SK-N-SH (cell line): ENCODE measurements at regions of chr7 and their contacts with region 1.

Region 1: GRCh38 chr7:73828107-73828803 is 2.5 kb upstream of the CLDN4 start:
- DNase-seq: peak; percentile 93
- H3K4me3 ChIP-seq: no peak overlapping the region
- H3K27ac ChIP-seq: peak overlapping the region; percentile 19 to 94; a peak in 3 of 4 replicates
- H3K4me1 ChIP-seq: peaks cover 21 to 54% of the 10 kb centered on the region in 2 experiments
- H3K27me3 ChIP-seq: no peaks in the 10 kb centered on the region
- CTCF ChIP-seq: no peak
- EP300 ChIP-seq: no peak; a peak in 1 of 4 replicates
- RAD21 ChIP-seq: no peak; the same call in 1 of the 2 replicates

Region 2: DNA sequence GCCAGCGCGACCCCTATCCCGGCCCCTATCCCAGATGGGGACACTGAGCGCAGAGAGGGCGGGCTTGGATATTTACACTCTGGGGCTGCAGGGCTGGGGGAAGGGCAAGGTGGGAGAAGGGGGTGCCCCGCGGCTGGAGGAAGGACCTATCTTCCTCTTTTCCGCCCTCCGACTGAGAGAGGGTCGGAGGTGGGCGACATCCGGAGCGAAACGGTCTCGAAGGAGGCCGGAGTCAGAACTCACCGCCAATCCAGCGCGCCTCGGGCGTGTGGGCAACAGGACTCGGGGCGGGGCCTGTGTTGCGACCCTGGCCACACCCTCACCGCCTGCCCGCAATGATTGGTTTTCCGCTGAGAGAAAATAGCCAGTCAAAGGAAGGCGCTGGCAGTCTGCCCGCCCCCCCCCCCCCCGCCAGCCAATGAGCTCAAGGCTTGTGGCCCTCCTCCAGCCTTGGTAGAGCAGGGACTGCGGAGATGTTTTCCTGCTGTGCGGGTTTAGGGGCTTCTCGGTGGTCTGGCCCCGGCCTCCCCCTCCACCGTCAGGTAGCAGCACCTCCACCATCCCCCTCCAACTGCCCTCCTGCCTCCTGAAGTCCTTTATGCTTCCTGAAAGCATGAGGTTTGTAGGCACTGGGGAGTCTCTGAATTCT is 14.1 kb after region 1 on chr7 and contains the start of gene METTL27:
- CTCF ChIA-PET with region 1: interaction called, 44 read pairs
- POLR2A ChIA-PET with region 1: interaction called, 10 read pairs
- DNase-seq: peak; percentile 100
- H3K4me3 ChIP-seq: peak within 1 kb of the TSS; percentile 57 to 99
- H3K27ac ChIP-seq: peak within 1 kb of the TSS; percentile 57 to 76; a peak in 3 of 4 replicates
- H3K4me1 ChIP-seq: peaks cover 0 to 8% of the 10 kb centered on the region in 2 experiments; a peak in 1 of 4 replicates
- H3K27me3 ChIP-seq: no peaks in the 10 kb centered on the region
- CTCF ChIP-seq: no peak
- EP300 ChIP-seq: no peak
- RAD21 ChIP-seq: no peak
- polyA plus RNA-seq, gene METTL27: 2.9 and 3.1 TPM in 2 replicates

Region 3: GRCh38 chr7:73872056-73872908 is 44.0 kb after region 1 on chr7:
- CTCF ChIA-PET with region 1: no interaction called
- POLR2A ChIA-PET with region 1: no interaction called
- DNase-seq: no peak
- H3K4me3 ChIP-seq: no peak overlapping the region
- H3K27ac ChIP-seq: no peak overlapping the region
- H3K4me1 ChIP-seq: peaks cover 0 to 33% of the 10 kb centered on the region in 2 experiments; a peak in 1 of 4 replicates
- H3K27me3 ChIP-seq: no peaks in the 10 kb centered on the region
- CTCF ChIP-seq: no peak
- EP300 ChIP-seq: peak in 1 of 2 experiments; percentile 14; a peak in 1 of 4 replicates
- RAD21 ChIP-seq: no peak